Head of caudate nucleus (tissue), 42 donors: ENCODE measurements at regions of chr15 and their contacts with region 1.

Region 1: DNA sequence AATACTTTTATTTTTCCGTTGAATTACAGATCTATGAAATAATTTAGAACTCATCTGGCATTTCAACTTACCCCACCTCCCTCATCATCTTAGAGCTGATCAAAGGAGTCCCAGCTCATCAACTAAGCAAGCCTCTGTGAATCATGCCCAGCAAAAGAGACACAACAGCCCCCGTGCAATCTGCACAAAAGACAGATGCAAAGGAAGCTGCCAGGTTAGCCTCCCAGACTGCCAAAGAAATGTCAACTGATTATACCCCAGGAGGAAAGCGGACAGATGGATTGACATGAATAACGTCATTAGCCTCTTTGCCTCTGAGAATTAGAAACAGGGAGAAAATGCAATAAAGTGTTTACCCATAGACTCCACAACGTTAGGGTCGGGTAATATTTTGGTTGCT is 75.0 kb downstream of the GABRB3 start:
- DNase-seq: peak in 11 of 42 donors; percentile 20 to 65 (median 44)

Region 2: DNA sequence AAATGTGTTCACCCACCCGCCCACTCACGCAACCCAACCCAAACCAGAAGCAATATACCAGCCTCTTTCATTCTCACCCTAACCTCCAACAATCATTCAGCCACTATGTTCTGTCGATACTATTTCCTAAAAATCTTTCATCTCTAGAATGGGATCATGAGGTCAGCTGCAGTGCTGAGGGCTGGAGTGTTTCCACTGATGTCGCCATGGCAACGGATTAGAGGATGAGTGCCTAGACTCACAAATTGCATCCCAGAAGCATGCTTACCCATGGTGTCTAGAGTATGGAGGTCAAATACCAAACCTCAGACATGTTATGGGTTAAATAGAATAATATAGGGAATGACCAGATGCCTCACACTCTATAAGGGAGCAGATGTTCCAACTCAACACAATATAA is 63.6 kb before region 1 on chr15:
- intact Hi-C with region 1: loop called (anchors 10 kb)
- DNase-seq: no peak

Region 3: GRCh38 chr15:26806144-26806543 is 108.2 kb after region 1 on chr15:
- intact Hi-C with region 1: no loop called
- DNase-seq: no peak